CD4-positive, alpha-beta T cell (primary cell): ENCODE measurements at regions of chr17 and their contacts with region 1.

Region 1: DNA sequence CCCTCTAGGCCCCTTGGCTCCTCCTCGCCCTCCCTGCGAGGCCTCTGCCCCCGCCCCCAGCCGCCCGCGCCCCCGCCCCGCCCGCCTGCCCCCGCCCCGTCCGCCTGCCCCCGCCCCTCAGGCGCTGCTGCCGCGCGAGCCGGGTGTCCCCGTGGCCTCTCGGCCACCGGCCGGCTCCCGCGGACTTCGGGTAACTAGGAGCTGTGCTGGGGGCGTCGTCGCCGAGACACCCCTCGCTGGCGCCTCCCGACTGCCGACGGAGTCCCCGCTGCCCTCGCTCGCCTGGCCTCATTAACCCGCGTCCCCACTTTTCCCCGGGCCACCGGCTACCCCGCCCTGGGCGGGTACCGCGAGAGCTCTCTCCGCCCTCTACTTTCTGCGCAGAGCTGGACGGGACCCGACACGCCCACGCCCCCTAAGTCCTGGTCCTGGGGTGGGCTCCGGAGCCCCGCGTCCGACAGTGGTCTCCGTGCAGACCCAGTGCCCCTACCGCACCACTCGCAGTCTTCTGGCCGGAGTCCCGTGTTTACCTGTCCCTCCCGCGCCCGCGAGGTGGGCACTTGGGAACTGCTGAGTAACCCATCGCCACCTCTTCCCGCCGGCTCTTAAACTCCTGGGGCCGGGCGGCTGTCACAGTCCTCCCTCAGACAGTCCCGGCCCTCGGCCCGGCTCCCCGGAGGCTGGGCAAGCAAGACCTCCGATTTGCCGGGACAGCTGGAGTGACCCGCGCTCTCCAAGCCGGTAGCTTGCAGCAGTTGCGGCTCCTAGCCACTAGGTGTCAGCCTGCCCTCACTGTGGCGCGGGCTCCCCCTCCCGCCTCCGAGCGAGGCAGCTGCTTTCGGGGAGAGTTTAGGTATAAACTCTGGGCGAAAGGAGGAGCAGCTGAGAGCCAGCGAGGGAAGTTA is at the start of gene TLCD1:
- DNase-seq: peak; percentile 82 to 94 (median 86)
- ATAC-seq: peak; percentile 43
- H3K4me3 ChIP-seq: peak within 1 kb of the TSS; percentile 75
- H3K4me3 Mint-ChIP-seq: peak within 1 kb of the TSS; percentile 98
- H3K27ac ChIP-seq: peak within 1 kb of the TSS; percentile 99 to 100
- H3K27ac Mint-ChIP-seq: peak within 1 kb of the TSS; percentile 100
- H3K4me1 ChIP-seq: peaks cover 66% of the 10 kb centered on the region
- H3K4me1 Mint-ChIP-seq: peaks cover 64% of the 10 kb centered on the region
- H3K27me3 ChIP-seq: no peaks in the 10 kb centered on the region
- H3K27me3 Mint-ChIP-seq: no peaks in the 10 kb centered on the region
- CTCF ChIP-seq: peak; percentile 99
- total RNA-seq, gene TLCD1: 0.39 to 0.60 TPM

Region 2: GRCh38 chr17:28193241-28193640 is 533.2 kb before region 1 on chr17:
- CTCF ChIA-PET with region 1: no interaction called
- POLR2A ChIA-PET with region 1: no interaction called
- intact Hi-C with region 1: no loop called
- DNase-seq: peak in 3 of 14 experiments; percentile 7 to 16 (median 8)
- ATAC-seq: no peak
- H3K4me3 ChIP-seq: no peak overlapping the region
- H3K4me3 Mint-ChIP-seq: no peak overlapping the region
- H3K27ac ChIP-seq: no peak overlapping the region
- H3K27ac Mint-ChIP-seq: no peak overlapping the region
- H3K4me1 ChIP-seq: peaks cover 4% of the 10 kb centered on the region
- H3K4me1 Mint-ChIP-seq: no peaks in the 10 kb centered on the region
- H3K27me3 ChIP-seq: no peaks in the 10 kb centered on the region
- H3K27me3 Mint-ChIP-seq: no peaks in the 10 kb centered on the region
- CTCF ChIP-seq: no peak

Region 3: DNA sequence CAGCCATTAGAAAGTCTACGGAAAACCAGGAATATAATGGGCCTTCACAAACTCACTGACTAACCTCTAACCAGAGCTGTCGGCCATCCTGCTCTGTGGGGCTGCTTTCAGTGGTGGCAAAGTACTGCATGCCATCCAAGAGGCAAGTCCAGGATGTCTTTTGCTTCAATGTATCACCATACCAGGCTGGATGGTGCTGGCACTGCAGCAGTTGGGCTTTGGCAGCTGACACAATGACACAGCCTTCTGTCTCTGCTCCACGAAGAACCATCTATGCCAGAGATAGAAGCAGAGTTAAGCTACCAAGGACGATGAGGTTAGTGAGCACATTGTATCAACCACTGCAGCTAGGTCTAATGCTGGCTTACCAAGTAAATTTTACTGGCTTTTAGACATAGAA is 102.8 kb before region 1 on chr17:
- CTCF ChIA-PET with region 1: no interaction called
- POLR2A ChIA-PET with region 1: no interaction called
- intact Hi-C with region 1: no loop called
- DNase-seq: no peak
- ATAC-seq: no peak
- H3K4me3 ChIP-seq: no peak overlapping the region
- H3K4me3 Mint-ChIP-seq: no peak overlapping the region
- H3K27ac ChIP-seq: no peak overlapping the region
- H3K27ac Mint-ChIP-seq: no peak overlapping the region
- H3K4me1 ChIP-seq: no peaks in the 10 kb centered on the region
- H3K4me1 Mint-ChIP-seq: peaks cover 4% of the 10 kb centered on the region
- H3K27me3 ChIP-seq: no peaks in the 10 kb centered on the region
- H3K27me3 Mint-ChIP-seq: no peaks in the 10 kb centered on the region
- CTCF ChIP-seq: no peak

Region 4: GRCh38 chr17:28661635-28662537 is 64.6 kb before region 1 on chr17 and contains the starts of genes SDF2 and SUPT6H:
- CTCF ChIA-PET with region 1: interaction called, 12 read pairs
- POLR2A ChIA-PET with region 1: interaction called, 11 read pairs
- intact Hi-C with region 1: no loop called
- DNase-seq: peak; percentile 88 to 97 (median 92)
- ATAC-seq: peak; percentile 83
- H3K4me3 ChIP-seq: peak within 1 kb of the TSS; percentile 81
- H3K4me3 Mint-ChIP-seq: peak within 1 kb of the TSS; percentile 99
- H3K27ac ChIP-seq: peak within 1 kb of the TSS; percentile 97 to 99
- H3K27ac Mint-ChIP-seq: peak within 1 kb of the TSS; percentile 99
- H3K4me1 ChIP-seq: peaks cover 45% of the 10 kb centered on the region
- H3K4me1 Mint-ChIP-seq: peaks cover 64% of the 10 kb centered on the region
- H3K27me3 ChIP-seq: no peaks in the 10 kb centered on the region
- H3K27me3 Mint-ChIP-seq: no peaks in the 10 kb centered on the region
- CTCF ChIP-seq: no peak
- total RNA-seq, gene SDF2: 30.3 to 32.0 TPM
- total RNA-seq, gene SUPT6H: 149 to 151 TPM

Region 5: DNA sequence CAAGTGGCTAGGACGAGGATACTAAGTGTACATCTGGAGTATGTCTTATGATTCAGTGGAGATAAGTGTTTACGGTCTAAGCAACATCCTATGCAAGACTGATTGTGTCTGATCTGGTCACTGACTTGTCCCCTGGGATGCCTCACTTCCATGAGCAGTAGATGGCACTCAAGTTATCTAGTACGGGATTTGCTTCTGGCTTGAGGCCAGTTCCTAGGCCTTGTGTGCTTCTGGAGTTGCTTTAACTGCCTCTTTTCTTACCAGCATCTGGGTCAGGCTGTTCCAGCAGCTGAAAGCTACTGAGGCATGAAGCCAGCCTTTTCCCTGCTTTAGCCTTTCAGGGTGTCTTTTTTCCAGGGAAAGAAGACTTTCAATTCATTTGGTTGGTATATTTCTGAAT is 41.5 kb before region 1 on chr17:
- CTCF ChIA-PET with region 1: no interaction called
- POLR2A ChIA-PET with region 1: no interaction called
- intact Hi-C with region 1: no loop called
- DNase-seq: no peak
- ATAC-seq: no peak
- H3K4me3 ChIP-seq: no peak overlapping the region
- H3K4me3 Mint-ChIP-seq: no peak overlapping the region
- H3K27ac ChIP-seq: no peak overlapping the region
- H3K27ac Mint-ChIP-seq: no peak overlapping the region
- H3K4me1 ChIP-seq: no peaks in the 10 kb centered on the region
- H3K4me1 Mint-ChIP-seq: no peaks in the 10 kb centered on the region
- H3K27me3 ChIP-seq: no peaks in the 10 kb centered on the region
- H3K27me3 Mint-ChIP-seq: no peaks in the 10 kb centered on the region
- CTCF ChIP-seq: no peak

Region 6: GRCh38 chr17:28743225-28744103 is 17.0 kb after region 1 on chr17 and contains the start of gene TRAF4:
- CTCF ChIA-PET with region 1: interaction called, 373 read pairs
- POLR2A ChIA-PET with region 1: interaction called, 268 read pairs
- intact Hi-C with region 1: loop called in 1 of 2 experiments (anchors 1 kb)
- DNase-seq: peak in 13 of 14 experiments; percentile 53 to 92 (median 67)
- ATAC-seq: peak; percentile 88
- H3K4me3 ChIP-seq: peak within 1 kb of the TSS; percentile 76
- H3K4me3 Mint-ChIP-seq: peak within 1 kb of the TSS; percentile 90
- H3K27ac ChIP-seq: peak within 1 kb of the TSS; percentile 72 to 88
- H3K27ac Mint-ChIP-seq: peak within 1 kb of the TSS; percentile 88
- H3K4me1 ChIP-seq: peaks cover 59% of the 10 kb centered on the region
- H3K4me1 Mint-ChIP-seq: peaks cover 27% of the 10 kb centered on the region
- H3K27me3 ChIP-seq: no peaks in the 10 kb centered on the region
- H3K27me3 Mint-ChIP-seq: no peaks in the 10 kb centered on the region
- CTCF ChIP-seq: no peak
- total RNA-seq, gene TRAF4: 411 to 416 TPM

Region 7: DNA sequence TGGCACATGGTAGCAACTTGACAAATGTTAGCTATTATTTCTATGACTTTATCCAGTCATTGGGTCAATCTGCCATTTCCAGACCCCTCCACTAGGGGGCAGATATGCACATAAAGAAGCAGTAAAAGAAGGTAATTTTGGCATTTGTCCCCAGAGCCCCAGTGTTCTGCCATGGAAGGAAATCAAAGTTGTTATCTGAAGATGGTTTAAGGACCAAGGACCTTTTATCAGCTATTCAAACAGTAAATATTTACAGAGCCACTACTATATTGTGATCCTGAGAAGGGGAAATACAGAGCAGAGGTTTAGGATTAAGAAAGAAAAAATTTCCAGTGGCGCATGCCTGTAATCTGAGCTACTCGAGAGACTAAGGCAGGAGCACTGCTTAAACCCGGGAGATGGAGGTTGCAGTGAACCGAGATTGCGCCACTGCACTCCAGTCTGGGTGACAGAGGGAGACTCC is 37.4 kb after region 1 on chr17:
- CTCF ChIA-PET with region 1: interaction called, 70 read pairs
- POLR2A ChIA-PET with region 1: interaction called, 31 read pairs
- intact Hi-C with region 1: loop called (anchors 5 kb)
- DNase-seq: peak; percentile 61 to 85 (median 76)
- ATAC-seq: peak; percentile 89
- H3K4me3 ChIP-seq: no peak overlapping the region
- H3K4me3 Mint-ChIP-seq: no peak overlapping the region
- H3K27ac ChIP-seq: no peak overlapping the region
- H3K27ac Mint-ChIP-seq: peak overlapping the region; percentile 7
- H3K4me1 ChIP-seq: no peaks in the 10 kb centered on the region
- H3K4me1 Mint-ChIP-seq: peaks cover 8% of the 10 kb centered on the region
- H3K27me3 ChIP-seq: no peaks in the 10 kb centered on the region
- H3K27me3 Mint-ChIP-seq: no peaks in the 10 kb centered on the region
- CTCF ChIP-seq: peak; percentile 97

Region 8: GRCh38 chr17:28896884-28897768 is 170.6 kb after region 1 on chr17 and contains the start of gene FLOT2:
- CTCF ChIA-PET with region 1: interaction called, 12 read pairs
- POLR2A ChIA-PET with region 1: interaction called, 15 read pairs
- intact Hi-C with region 1: loop called in 1 of 2 experiments (anchors 2 kb)
- DNase-seq: peak; percentile 50 to 83 (median 68)
- ATAC-seq: peak; percentile 79
- H3K4me3 ChIP-seq: peak within 1 kb of the TSS; percentile 83
- H3K4me3 Mint-ChIP-seq: peak within 1 kb of the TSS; percentile 93
- H3K27ac ChIP-seq: peak within 1 kb of the TSS; percentile 86 to 87
- H3K27ac Mint-ChIP-seq: peak within 1 kb of the TSS; percentile 95
- H3K4me1 ChIP-seq: peaks cover 75% of the 10 kb centered on the region
- H3K4me1 Mint-ChIP-seq: peaks cover 66% of the 10 kb centered on the region
- H3K27me3 ChIP-seq: no peaks in the 10 kb centered on the region
- H3K27me3 Mint-ChIP-seq: no peaks in the 10 kb centered on the region
- CTCF ChIP-seq: peak; percentile 60
- total RNA-seq, gene FLOT2: 79.7 to 85.1 TPM

Region 9: DNA sequence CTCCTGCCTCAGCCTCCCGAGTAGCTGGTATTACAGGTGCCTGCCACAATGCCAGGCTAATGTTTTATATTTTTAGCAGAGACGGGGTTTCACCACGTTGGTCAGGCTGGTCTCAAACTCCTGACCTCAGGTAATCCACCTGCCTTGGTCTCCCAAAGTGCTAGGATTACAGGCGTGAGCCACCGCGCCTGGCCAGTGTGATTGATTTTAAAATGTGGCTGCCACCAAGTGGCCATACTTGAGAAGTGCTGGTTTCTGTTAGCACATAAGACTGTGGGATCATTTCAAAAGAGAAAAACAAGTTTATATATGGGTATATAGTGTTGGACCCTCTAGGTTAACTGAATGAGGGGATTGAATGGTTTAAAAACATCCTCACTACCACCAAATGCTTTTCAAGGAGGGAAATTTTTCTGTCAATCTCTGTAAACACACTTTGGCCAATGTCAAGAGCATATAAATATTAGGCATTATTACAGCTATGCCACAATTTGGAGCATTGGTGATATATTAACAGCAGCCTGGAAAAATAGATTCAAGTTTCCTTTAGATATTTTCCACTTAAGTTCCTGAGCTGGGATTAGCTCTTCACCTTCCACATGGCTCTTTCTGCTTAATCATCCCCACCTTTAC is 189.9 kb after region 1 on chr17:
- CTCF ChIA-PET with region 1: interaction called, 10 read pairs
- POLR2A ChIA-PET with region 1: interaction called, 6 read pairs
- intact Hi-C with region 1: loop called in 1 of 2 experiments (anchors 2 kb)
- DNase-seq: peak in 12 of 14 experiments; percentile 22 to 72 (median 38)
- ATAC-seq: peak; percentile 86
- H3K4me3 ChIP-seq: no peak overlapping the region
- H3K4me3 Mint-ChIP-seq: no peak overlapping the region
- H3K27ac ChIP-seq: no peak overlapping the region
- H3K27ac Mint-ChIP-seq: peak overlapping the region; percentile 34
- H3K4me1 ChIP-seq: no peaks in the 10 kb centered on the region
- H3K4me1 Mint-ChIP-seq: peaks cover 8% of the 10 kb centered on the region
- H3K27me3 ChIP-seq: no peaks in the 10 kb centered on the region
- H3K27me3 Mint-ChIP-seq: no peaks in the 10 kb centered on the region
- CTCF ChIP-seq: peak; percentile 85

Region 10: GRCh38 chr17:29059281-29059680 is 332.8 kb after region 1 on chr17:
- CTCF ChIA-PET with region 1: no interaction called
- POLR2A ChIA-PET with region 1: no interaction called
- intact Hi-C with region 1: no loop called
- DNase-seq: no peak
- ATAC-seq: no peak
- H3K4me3 ChIP-seq: no peak overlapping the region
- H3K4me3 Mint-ChIP-seq: no peak overlapping the region
- H3K27ac ChIP-seq: no peak overlapping the region
- H3K27ac Mint-ChIP-seq: no peak overlapping the region
- H3K4me1 ChIP-seq: no peaks in the 10 kb centered on the region
- H3K4me1 Mint-ChIP-seq: no peaks in the 10 kb centered on the region
- H3K27me3 ChIP-seq: no peaks in the 10 kb centered on the region
- H3K27me3 Mint-ChIP-seq: no peaks in the 10 kb centered on the region
- CTCF ChIP-seq: no peak

Region 11: GRCh38 chr17:29116804-29117772 is 390.6 kb after region 1 on chr17:
- CTCF ChIA-PET with region 1: interaction called, 3 read pairs
- POLR2A ChIA-PET with region 1: interaction called, 15 read pairs
- intact Hi-C with region 1: loop called (anchors 2 to 5 kb)
- DNase-seq: peak; percentile 70 to 87 (median 74)
- ATAC-seq: peak; percentile 91
- H3K4me3 ChIP-seq: no peak overlapping the region
- H3K4me3 Mint-ChIP-seq: no peak overlapping the region
- H3K27ac ChIP-seq: no peak overlapping the region
- H3K27ac Mint-ChIP-seq: no peak overlapping the region
- H3K4me1 ChIP-seq: peaks cover 11% of the 10 kb centered on the region
- H3K4me1 Mint-ChIP-seq: peaks cover 5% of the 10 kb centered on the region
- H3K27me3 ChIP-seq: no peaks in the 10 kb centered on the region
- H3K27me3 Mint-ChIP-seq: no peaks in the 10 kb centered on the region
- CTCF ChIP-seq: peak; percentile 98